BJ (cell line): ENCODE measurements at regions of chr7 and their contacts with region 1.

Region 1: DNA sequence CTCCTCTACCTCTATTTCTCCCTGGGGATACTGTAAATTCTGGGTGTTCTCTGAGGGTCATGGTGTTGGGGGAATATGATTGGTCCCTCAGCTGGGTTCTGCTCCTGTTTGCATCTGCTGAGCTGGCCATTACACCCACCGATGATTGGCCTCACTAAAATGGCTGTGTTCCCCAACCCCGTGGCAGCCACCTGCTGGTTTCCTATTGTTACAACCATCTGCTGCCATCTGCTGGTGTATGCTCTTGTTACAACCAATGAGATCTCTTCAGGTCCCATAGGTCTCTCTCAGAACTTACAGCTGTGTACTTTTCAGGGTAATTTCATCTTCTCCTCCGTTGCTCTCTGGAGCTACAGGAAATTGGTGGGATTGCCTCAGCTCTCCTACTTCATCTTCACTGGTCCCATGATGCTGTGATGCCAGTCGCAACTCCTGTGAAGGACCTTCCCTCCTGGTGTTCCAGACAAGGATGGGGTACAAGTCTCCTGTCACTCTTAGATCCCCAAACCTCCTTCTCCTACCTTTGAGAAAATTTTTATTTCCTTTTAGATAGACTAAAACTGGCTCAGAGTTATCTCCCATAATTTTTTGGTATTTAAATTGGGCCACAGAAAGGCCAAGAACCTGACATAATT is 303.5 kb upstream of the SMIM30 start:
- DNase-seq: peak; percentile 3
- H3K4me3 ChIP-seq: no peak overlapping the region
- H3K27me3 ChIP-seq: no peaks in the 10 kb centered on the region; the same call in 1 of the 2 replicates
- CTCF ChIP-seq: peak; percentile 88

Region 2: DNA sequence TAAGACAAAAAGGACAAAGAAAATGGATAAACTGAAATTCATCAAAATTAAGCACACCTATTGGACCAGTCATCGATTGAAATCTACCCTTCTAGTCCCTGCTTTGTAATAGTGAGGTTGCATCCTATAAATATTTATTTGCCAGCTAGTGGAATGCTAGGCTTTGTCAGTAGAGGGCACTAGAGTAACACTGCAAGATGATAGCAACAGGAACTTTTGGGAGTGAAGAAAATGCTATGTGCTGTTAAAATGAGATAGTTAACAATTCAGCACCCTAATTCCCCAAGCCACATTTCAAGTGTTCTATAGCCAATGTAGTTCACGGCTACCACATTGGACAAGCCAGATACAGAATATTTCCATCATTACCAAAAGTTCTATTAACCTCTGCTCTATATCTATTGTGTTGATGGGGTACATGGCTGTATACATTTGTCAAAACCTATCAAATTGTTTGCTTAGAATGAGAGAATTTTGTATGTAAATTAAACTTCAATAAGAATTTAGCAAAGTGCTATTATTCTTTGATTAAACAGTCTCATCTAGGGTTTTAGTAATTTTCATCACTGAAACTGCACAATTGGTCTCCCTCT is 871.2 kb before region 1 on chr7:
- CTCF ChIA-PET with region 1: interaction called, 20 read pairs
- POLR2A ChIA-PET with region 1: no interaction called
- DNase-seq: no peak
- H3K4me3 ChIP-seq: no peak overlapping the region
- H3K27me3 ChIP-seq: no peaks in the 10 kb centered on the region
- CTCF ChIP-seq: peak; percentile 94

Region 3: GRCh38 chr7:113408999-113409398 is 12.8 kb before region 1 on chr7:
- CTCF ChIA-PET with region 1: interaction called, 13 read pairs
- POLR2A ChIA-PET with region 1: no interaction called
- DNase-seq: no peak
- H3K4me3 ChIP-seq: no peak overlapping the region
- H3K27me3 ChIP-seq: no peaks in the 10 kb centered on the region
- CTCF ChIP-seq: no peak

Region 4: GRCh38 chr7:113483657-113484056 is 61.8 kb after region 1 on chr7:
- CTCF ChIA-PET with region 1: no interaction called
- POLR2A ChIA-PET with region 1: no interaction called
- DNase-seq: no peak
- H3K4me3 ChIP-seq: no peak overlapping the region
- H3K27me3 ChIP-seq: no peaks in the 10 kb centered on the region
- CTCF ChIP-seq: no peak

Region 5: GRCh38 chr7:113548561-113548960 is 126.7 kb after region 1 on chr7:
- CTCF ChIA-PET with region 1: no interaction called
- POLR2A ChIA-PET with region 1: no interaction called
- DNase-seq: no peak
- H3K4me3 ChIP-seq: no peak overlapping the region
- H3K27me3 ChIP-seq: no peaks in the 10 kb centered on the region
- CTCF ChIP-seq: no peak